AG04449 (cell line): ENCODE measurements at regions of chrX and their contacts with region 1.

Region 1: DNA sequence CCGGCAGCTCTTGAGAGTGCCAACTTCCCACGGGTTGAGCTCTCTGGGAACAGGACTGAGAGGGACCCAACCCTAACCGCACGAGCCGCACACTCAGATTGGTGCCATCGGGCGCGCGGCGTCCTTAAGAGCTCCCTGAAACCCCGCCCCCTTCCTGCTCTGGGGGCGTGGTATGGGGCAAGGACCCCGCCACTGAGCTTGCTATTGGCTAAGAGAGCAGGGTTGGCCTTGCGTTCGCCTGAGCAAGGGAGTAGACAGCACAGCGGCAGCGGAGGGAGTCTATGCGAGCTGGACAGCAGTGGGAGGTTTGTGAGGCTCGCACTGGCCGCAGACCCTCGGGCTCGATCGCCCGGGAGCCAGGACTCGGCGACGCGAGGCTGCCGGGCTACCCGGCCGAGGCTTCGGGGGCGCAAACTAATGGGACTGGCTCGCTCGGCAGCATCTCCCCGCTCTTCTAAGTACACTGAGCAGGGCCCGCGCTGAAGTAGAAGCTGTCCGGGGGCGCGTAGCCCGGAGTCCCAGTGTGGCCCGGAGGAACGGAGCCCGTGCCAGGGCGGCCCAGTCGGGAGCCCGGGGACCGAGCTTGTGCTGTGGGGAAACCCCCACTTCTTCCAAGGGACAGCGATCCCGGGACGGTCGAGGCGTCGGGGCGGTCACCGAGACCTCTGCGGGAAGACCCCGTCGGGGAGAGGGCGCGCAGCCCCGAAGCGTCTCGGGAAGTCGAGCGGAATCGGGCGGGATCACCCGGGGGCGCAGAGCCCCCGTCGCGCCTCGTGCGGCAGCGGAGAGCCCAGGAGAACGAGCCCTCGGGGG is at the start of gene EFNB1:
- DNase-seq: peak; percentile 87
- H3K4me3 ChIP-seq: peak within 1 kb of the TSS; percentile 67
- CTCF ChIP-seq: no peak

Region 2: DNA sequence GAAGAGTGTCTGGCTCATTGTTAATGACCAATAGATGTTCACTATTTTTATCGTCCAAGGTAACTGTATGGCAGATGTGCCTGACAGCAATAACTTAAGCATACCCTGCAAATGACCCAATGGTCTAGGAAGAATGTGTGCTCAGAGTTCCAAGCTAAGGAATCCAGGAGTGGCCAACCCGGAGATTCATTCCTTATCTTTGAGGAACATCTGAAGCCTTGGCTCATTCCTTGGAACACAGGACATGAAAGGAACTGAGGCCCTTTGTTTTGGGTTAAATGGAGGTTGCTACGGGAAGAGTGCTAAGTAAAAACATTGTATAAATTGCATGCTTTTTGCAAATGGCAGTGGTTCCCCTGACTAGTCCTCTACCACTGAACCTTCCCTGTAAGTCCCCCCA is 39.0 kb before region 1 on chrX:
- CTCF ChIA-PET with region 1: no interaction called
- POLR2A ChIA-PET with region 1: no interaction called
- DNase-seq: no peak
- H3K4me3 ChIP-seq: no peak overlapping the region
- CTCF ChIP-seq: no peak

Region 3: GRCh38 chrX:69060631-69061408 is 231.9 kb after region 1 on chrX:
- CTCF ChIA-PET with region 1: interaction called, 51 read pairs
- POLR2A ChIA-PET with region 1: interaction called, 5 read pairs
- DNase-seq: no peak
- H3K4me3 ChIP-seq: no peak overlapping the region
- CTCF ChIP-seq: peak; percentile 27

Region 4: GRCh38 chrX:69130439-69130838 is 301.5 kb after region 1 on chrX:
- CTCF ChIA-PET with region 1: interaction called, 15 read pairs
- POLR2A ChIA-PET with region 1: interaction called, 4 read pairs
- DNase-seq: no peak
- H3K4me3 ChIP-seq: no peak overlapping the region
- CTCF ChIP-seq: no peak

Region 5: DNA sequence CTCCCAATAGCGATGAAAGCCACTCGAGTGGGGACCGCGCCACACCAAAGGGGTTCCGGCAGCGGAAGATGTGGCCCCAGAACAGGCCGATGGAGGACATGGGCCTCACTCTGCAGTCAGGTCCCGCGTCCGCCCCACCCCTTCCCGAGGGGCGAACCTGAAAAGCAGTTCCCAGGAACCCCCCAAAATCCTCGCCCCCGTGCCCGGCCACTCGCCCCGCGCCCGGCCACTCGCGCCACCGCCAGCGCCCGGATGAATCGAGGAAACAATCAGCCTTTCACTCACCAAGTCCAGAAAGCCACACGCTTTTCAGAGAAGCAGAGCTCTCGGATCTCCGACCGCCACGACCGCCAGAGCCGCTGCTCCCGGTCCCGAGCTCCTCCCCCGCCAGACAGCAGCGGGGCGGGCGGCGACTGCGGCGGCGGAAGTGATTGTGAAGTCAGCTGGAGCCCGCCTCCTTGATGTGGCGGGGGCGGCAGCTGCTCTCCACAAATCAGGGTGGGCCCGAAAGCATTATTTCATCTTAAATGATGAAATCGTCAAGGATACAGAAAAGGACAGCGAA is 336.2 kb after region 1 on chrX and contains the start of gene PJA1:
- CTCF ChIA-PET with region 1: interaction called, 5 read pairs
- POLR2A ChIA-PET with region 1: interaction called, 11 read pairs
- DNase-seq: no peak
- H3K4me3 ChIP-seq: peak within 1 kb of the TSS; percentile 73
- CTCF ChIP-seq: no peak

Region 6: DNA sequence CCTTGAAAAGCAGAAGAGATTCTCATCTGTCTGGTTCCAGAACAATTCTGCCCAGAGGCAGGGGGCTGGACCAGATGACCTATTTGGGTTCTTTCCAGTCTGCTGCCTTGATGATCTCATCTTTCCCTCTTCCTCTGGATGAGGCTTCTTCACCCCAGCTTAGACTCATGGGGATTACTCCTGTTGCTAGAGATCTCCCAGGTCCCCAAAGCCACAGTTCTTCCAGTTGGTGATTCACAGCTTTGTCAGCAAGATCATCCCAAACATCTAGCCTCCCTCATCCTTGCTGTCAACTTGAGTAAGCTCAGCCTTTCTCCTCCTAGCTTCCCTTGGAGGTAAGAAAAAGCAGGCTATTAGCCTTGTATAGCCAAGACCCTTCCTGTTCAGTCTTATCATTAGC is 400.5 kb after region 1 on chrX:
- CTCF ChIA-PET with region 1: interaction called, 281 read pairs
- POLR2A ChIA-PET with region 1: interaction called, 10 read pairs
- DNase-seq: peak; percentile 36
- H3K4me3 ChIP-seq: no peak overlapping the region
- CTCF ChIP-seq: no peak

Region 7: DNA sequence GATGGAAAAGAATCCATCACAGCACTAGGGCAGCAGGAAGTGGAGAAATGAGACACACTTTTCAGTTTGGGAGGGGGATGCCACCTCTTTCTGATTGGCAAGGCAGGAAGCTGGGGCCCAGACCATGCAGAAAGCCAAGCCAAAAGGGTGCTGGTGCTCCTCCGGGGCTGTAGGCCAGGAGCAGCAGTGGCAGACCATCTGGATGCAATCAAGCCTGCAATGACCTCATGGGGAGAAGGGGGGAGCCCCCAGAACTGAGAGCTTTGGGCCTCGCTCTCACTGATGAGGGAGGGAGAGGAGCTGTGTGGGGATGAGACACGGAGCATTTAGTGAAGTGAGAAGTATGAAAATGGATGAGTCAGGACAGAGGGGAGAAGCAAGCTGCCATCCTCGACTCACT is 533.9 kb after region 1 on chrX:
- CTCF ChIA-PET with region 1: no interaction called
- POLR2A ChIA-PET with region 1: interaction called, 16 read pairs
- DNase-seq: peak; percentile 49
- H3K4me3 ChIP-seq: no peak overlapping the region
- CTCF ChIP-seq: no peak